Heart left ventricle (tissue), 16 donors: ENCODE measurements at regions of chr5 and their contacts with region 1.

Region 1: GRCh38 chr5:96235008-96235910 is 197.8 kb downstream of the PCSK1 start:
- DNase-seq: peak in 1 of 5 donors; percentile 23
- ATAC-seq: peak; percentile 93 to 98 (median 96)
- H3K4me3 ChIP-seq: peak overlapping the region in 1 of 12 donors; percentile 8
- H3K27ac ChIP-seq: peak overlapping the region; percentile 70 to 95 (median 80)
- H3K4me1 ChIP-seq: peaks cover 0 to 21% (median 13%) of the 10 kb centered on the region in 12 donors
- H3K27me3 ChIP-seq: no peaks in the 10 kb centered on the region
- CTCF ChIP-seq: no peak
- POLR2A ChIP-seq: peak in 1 of 2 donors; percentile 19

Region 2: DNA sequence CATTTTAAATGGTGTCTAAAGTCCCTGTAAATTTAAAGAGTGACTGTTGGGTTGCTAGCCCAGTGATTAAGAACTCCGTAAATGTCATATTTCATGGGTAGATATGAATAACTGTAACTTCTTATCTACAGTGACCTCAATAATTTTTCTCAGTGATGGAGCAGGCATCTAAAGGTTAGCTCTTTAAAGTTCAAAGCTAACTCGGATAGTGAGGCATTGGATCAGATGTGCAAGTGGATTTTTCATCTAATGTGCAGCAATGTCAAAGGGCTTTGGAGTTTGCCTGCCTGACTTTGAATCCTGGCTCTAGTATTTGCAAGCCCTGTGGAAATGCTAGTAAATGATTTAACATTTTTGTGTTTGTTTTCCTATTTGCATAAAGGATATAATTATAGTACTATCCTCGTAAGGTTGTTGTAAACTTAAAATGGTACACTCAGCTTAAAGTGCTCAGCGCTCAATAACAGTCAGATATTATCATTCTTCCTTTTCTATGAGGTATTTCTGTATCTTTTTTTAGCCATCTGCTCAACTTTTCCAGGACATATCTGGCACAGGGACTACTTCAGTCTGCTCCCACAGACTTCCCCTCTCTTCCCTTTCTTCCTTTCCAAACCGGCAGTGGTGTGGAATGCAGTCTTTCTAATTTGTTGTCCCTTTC is 109.9 kb before region 1 on chr5:
- intact Hi-C with region 1: loop called in 1 of 10 experiments (anchors 10 kb)
- DNase-seq: no peak
- ATAC-seq: peak; percentile 76 to 88 (median 86)
- H3K4me3 ChIP-seq: peak overlapping the region in 9 of 12 donors; percentile 19 to 40 (median 27)
- H3K27ac ChIP-seq: peak overlapping the region in 9 of 12 donors; percentile 10 to 64 (median 29)
- H3K4me1 ChIP-seq: peaks cover 0 to 18% (median 12%) of the 10 kb centered on the region in 12 donors
- H3K27me3 ChIP-seq: no peaks in the 10 kb centered on the region
- CTCF ChIP-seq: no peak
- POLR2A ChIP-seq: no peak